Right cardiac atrium (tissue), 5 donors: ENCODE measurements at regions of chr1 and their contacts with region 1.

Region 1: GRCh38 chr1:109984456-109985275 is at the start of gene AHCYL1:
- DNase-seq: peak; percentile 100
- ATAC-seq: peak; percentile 97 to 98
- H3K4me3 ChIP-seq: peak within 1 kb of the TSS; percentile 66
- H3K27ac ChIP-seq: peak within 1 kb of the TSS; percentile 94
- H3K4me1 ChIP-seq: peaks cover 8% of the 10 kb centered on the region
- H3K27me3 ChIP-seq: no peaks in the 10 kb centered on the region
- total RNA-seq, gene AHCYL1: 37.4 to 49.6 (median 43.8) TPM

Region 2: DNA sequence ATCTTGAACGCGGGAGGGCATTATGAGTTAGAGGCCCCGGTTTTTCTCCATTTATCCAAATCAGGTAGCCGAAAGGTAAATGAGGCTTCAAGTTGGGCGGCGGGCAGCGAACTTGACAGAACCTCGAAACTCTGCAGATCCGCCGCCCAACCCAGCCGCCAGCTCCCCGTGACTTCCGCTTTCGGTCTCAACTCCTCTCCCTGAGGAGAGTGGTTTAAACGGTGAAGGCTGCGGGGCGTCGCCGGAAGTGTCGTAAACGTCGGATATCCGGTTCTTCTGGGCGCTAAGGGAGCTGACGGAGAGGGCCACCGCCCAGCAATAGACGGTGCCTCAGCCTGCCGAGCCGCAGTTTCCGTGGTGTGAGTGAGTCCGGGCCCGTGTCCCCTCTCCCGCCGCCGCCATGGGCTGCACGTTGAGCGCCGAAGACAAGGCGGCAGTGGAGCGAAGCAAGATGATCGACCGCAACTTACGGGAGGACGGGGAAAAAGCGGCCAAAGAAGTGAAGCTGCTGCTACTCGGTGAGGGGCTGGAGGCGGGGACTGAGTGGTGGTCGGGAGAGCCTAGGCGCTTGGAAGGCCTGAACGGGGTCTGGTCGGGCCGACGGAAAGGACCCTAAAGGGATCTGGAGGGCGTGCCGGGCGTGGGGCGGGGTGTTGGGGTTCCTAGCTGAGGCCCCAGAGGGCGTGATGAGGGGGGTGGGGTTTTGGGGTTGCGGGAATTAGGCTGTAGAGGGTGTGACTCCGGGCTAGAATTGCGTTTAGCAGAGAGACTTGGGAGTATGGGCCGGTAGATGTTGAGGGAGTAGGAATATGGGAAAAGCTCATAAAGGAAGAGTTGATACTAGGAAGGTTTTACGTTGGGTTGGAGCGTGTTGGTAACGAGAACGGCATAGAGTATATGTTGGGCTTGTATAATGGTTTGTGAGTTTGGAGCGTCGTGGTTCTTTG is 436.1 kb before region 1 on chr1 and contains the start of gene GNAI3:
- intact Hi-C with region 1: loop called in 2 of 4 experiments (anchors 5 to 10 kb)
- DNase-seq: peak; percentile 97 to 98 (median 98)
- ATAC-seq: peak; percentile 97 to 98
- H3K4me3 ChIP-seq: peak within 1 kb of the TSS; percentile 75
- H3K27ac ChIP-seq: peak within 1 kb of the TSS; percentile 98
- H3K4me1 ChIP-seq: peaks cover 3% of the 10 kb centered on the region
- H3K27me3 ChIP-seq: no peaks in the 10 kb centered on the region
- total RNA-seq, gene GNAI3: 2.6 to 4.7 (median 3.0) TPM

Region 3: GRCh38 chr1:109636201-109636952 is 348.3 kb before region 1 on chr1:
- intact Hi-C with region 1: loop called (anchors 5 to 10 kb)
- DNase-seq: peak in 1 of 3 donors; percentile 54
- ATAC-seq: peak; percentile 38 to 42
- H3K4me3 ChIP-seq: no peak overlapping the region
- H3K27ac ChIP-seq: peak overlapping the region; percentile 20
- H3K4me1 ChIP-seq: peaks cover 2% of the 10 kb centered on the region
- H3K27me3 ChIP-seq: no peaks in the 10 kb centered on the region

Region 4: GRCh38 chr1:109773146-109773899 is 211.3 kb before region 1 on chr1:
- intact Hi-C with region 1: loop called in 3 of 4 experiments (anchors 1 to 2 kb)
- DNase-seq: peak; percentile 85 to 92 (median 92)
- ATAC-seq: peak; percentile 86 to 87
- H3K4me3 ChIP-seq: no peak overlapping the region
- H3K27ac ChIP-seq: no peak overlapping the region
- H3K4me1 ChIP-seq: no peaks in the 10 kb centered on the region
- H3K27me3 ChIP-seq: no peaks in the 10 kb centered on the region

Region 5: DNA sequence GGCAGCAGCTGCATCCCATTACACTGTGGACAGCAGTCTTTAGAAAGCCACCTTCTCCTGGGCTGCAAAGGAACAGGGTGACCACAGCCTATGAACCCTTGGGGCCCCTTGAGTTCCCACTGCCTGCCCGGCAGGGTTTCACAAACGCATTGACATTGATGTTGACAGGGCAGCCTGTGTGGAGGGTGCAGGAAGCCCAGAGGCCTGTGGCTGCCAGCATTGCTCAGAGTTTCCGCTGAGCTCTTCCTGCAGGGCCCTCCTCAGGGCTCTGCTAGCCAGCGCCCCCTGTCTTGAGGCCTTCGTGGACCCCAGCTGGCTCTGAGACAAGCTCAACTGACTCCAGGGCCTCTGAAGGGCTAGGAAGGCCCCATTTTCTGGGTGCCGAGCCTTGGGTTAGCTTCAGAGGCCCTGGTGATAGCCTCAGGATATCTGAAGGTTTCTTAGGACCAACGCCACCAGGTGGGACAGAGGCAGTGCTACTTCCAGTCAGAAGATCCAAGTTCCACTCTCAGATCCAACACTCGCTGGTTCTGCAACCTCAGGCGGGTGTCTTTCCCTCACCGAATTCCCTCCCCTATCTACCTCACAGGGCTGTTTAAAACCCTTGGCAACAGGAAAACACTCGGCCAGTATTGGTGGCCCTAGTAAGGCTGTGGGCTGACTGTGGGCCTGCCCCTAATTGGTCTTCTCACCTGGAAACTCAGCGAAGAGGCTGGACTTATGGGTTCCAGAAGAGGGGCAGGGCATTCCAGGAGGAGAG is 193.8 kb before region 1 on chr1:
- intact Hi-C with region 1: loop called in 1 of 4 experiments (anchors 5 kb)
- DNase-seq: peak; percentile 79 to 82 (median 80)
- ATAC-seq: peak; percentile 46 to 71
- H3K4me3 ChIP-seq: no peak overlapping the region
- H3K27ac ChIP-seq: peak overlapping the region; percentile 13
- H3K4me1 ChIP-seq: peaks cover 34% of the 10 kb centered on the region
- H3K27me3 ChIP-seq: no peaks in the 10 kb centered on the region